ENCODE measurements at regions of chr20 and their contacts with region 1.

Region 1: DNA sequence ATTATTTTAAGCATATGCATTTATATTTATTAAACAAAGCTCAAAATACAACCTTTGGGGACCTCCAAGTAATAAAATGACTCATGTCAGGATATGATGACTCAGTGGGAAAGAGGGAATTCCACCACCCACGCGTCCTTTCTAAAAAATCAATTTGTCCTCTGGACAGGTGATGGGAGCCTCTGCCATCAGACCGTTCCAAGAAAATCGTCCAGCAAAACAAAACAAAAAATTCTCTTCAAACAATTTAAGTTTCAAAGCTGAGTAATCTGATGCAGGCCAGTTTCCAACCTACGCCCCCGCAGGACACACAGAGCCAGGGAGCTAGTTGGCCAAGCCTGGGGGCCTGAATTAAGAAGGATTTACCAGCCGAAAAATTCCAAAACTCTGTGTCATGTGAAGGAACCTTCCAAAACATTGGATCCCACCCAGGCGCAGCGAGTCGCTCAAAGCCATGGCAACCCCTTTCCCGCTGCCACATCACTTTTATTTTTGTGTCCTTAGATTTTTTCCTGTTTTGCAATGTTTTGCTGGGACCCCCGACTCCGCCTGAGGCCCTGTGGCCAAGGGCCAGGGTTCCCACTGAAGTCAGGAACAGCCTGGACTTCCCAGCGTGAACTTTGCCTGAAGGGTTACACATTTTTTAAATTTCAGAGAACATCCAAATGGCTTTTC is 95.3 kb downstream of the NFATC2 start:
- DNase-seq: peak; percentile 95
- H3K4me3 ChIP-seq: peak overlapping the region in 1 of 3 experiments; percentile 3
- H3K27ac ChIP-seq: peak overlapping the region; percentile 83
- H3K4me1 ChIP-seq: peaks cover 20% of the 10 kb centered on the region
- H3K27me3 ChIP-seq: no peaks in the 10 kb centered on the region
- CTCF ChIP-seq: no peak
- POLR2A ChIP-seq: no peak

Region 2: DNA sequence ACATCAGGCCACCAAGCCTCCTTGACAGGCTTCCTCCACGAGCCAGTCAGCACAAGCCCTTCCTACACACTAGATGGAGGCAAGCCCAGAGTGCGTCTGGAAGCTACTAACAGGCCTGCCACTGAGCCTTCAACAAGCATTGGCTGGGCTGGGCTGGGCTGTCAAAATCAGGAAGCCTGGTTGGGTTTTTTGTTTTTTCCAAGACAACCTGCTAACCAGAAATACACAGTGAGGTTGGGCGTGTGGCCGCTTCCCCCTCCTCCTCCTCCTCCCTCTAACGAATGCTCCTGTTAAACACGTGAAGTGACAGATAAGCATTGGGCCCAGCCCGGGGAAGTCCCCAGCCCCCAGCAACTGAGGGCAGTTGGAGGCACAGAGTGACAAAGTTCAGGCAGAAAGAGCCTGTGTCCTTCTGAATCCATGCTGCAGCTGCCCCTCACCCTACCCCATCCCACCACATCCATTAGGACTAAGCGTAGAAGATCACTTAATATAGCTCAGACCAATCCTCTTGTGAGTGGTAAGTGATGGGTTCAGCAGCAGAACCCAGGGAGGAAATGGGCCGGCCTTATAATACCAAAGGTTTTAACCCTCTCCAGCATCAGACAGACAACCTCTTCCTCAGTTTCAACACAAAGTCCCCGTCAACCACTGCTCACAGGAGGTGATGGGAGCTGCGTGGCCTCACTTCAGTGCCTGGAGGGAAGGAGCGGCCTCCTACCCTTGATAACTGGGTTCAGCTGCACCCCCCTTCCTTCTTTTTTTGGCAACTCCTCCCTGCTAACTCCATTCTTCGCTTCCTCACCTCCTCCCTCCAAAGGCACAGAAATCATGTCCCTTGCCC is 94.2 kb after region 1 on chr20:
- CTCF ChIA-PET with region 1: interaction called, 3 read pairs
- POLR2A ChIA-PET with region 1: no interaction called
- dilution Hi-C with region 1: no loop called
- intact Hi-C with region 1: loop called (anchors 1 kb)
- DNase-seq: peak; percentile 85
- H3K4me3 ChIP-seq: peak overlapping the region in 2 of 3 experiments; percentile 36 to 47
- H3K27ac ChIP-seq: peak overlapping the region; percentile 42
- H3K4me1 ChIP-seq: peaks cover 25% of the 10 kb centered on the region
- H3K27me3 ChIP-seq: no peaks in the 10 kb centered on the region
- CTCF ChIP-seq: no peak
- POLR2A ChIP-seq: no peak